ENCODE measurements at regions of chr1 and their contacts with region 1.

Region 1: DNA sequence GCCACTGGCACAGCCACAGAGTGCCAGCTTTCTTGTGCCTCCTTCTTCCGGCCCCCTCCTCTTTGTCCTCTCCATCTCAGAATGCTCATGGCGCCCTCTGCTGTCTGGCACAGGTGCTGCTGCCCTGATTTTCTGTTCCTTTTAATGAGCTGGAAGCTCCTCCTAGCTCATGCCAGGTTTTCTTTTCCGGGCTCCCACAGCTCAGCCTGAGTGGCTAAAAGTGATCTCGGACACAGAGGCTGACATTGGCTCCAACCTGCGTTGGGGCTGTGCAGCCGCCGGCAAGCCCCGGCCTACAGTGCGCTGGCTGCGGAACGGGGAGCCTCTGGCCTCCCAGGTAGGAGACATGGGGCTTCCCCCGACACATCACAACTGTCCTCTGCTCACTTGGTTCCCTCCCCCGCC is 18.7 kb downstream of the CNTN2 start:
- DNase-seq: peak; percentile 83
- ATAC-seq: peak; percentile 86
- H3K4me3 Mint-ChIP-seq: no peak overlapping the region
- H3K27ac Mint-ChIP-seq: no peak overlapping the region
- H3K4me1 Mint-ChIP-seq: no peaks in the 10 kb centered on the region
- H3K27me3 Mint-ChIP-seq: no peaks in the 10 kb centered on the region
- CTCF ChIP-seq: peak; percentile 89

Region 2: GRCh38 chr1:204797401-204797800 is 264.3 kb before region 1 on chr1:
- CTCF ChIA-PET with region 1: no interaction called
- POLR2A ChIA-PET with region 1: no interaction called
- intact Hi-C with region 1: no loop called
- DNase-seq: no peak
- ATAC-seq: no peak
- H3K4me3 Mint-ChIP-seq: no peak overlapping the region
- H3K27ac Mint-ChIP-seq: no peak overlapping the region
- H3K4me1 Mint-ChIP-seq: no peaks in the 10 kb centered on the region
- H3K27me3 Mint-ChIP-seq: no peaks in the 10 kb centered on the region
- CTCF ChIP-seq: no peak

Region 3: GRCh38 chr1:204885288-204885711 is 176.4 kb before region 1 on chr1:
- CTCF ChIA-PET with region 1: no interaction called
- POLR2A ChIA-PET with region 1: no interaction called
- intact Hi-C with region 1: no loop called
- DNase-seq: no peak
- ATAC-seq: no peak
- H3K4me3 Mint-ChIP-seq: no peak overlapping the region
- H3K27ac Mint-ChIP-seq: no peak overlapping the region
- H3K4me1 Mint-ChIP-seq: no peaks in the 10 kb centered on the region
- H3K27me3 Mint-ChIP-seq: peaks cover 10% of the 10 kb centered on the region
- CTCF ChIP-seq: no peak

Region 4: GRCh38 chr1:204967451-204967850 is 94.2 kb before region 1 on chr1:
- CTCF ChIA-PET with region 1: interaction called, 71 read pairs
- POLR2A ChIA-PET with region 1: no interaction called
- intact Hi-C with region 1: no loop called
- DNase-seq: no peak
- ATAC-seq: no peak
- H3K4me3 Mint-ChIP-seq: no peak overlapping the region
- H3K27ac Mint-ChIP-seq: no peak overlapping the region
- H3K4me1 Mint-ChIP-seq: no peaks in the 10 kb centered on the region
- H3K27me3 Mint-ChIP-seq: peaks cover 6% of the 10 kb centered on the region
- CTCF ChIP-seq: no peak

Region 5: DNA sequence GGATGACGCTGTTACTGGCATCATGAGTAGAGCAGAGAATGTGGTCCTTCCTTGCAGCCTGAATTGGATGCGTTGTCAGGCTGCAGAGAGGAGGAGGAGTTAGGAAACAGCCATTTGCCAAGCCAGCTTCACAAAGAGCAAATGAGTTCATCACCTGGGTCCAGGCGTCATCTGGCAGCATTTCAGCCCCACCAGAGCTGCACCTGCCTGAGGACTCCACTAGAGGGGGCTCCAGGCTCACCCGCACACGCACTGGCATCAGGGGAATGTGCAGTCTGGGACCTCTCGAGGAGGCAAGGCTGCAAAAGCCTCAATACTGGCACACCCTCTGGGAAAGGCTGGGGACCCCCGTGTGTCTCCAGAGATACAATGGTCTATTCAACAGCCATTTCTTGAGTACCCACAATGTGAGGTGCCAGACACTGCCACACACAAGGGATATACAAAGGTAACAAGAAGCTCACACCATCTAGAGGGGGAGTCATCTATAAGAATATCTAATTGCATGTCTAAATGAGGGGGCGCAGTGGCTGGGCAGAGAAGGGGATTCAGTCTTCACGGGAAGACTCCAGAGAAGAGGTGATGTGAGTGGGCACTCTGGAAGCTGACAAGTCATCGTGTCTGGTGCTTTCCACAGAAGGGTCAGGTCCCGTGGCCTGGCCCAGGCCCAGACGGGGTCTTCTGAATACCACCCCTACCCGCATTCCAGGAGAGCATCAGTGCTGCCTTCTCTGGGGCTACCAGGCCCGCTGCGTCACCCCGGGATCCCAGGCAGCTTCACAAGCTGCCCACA is 72.2 kb before region 1 on chr1:
- CTCF ChIA-PET with region 1: interaction called, 188 read pairs
- POLR2A ChIA-PET with region 1: no interaction called
- intact Hi-C with region 1: loop called (anchors 5 kb)
- DNase-seq: peak; percentile 74
- ATAC-seq: peak; percentile 98
- H3K4me3 Mint-ChIP-seq: no peak overlapping the region
- H3K27ac Mint-ChIP-seq: no peak overlapping the region
- H3K4me1 Mint-ChIP-seq: peaks cover 12% of the 10 kb centered on the region
- H3K27me3 Mint-ChIP-seq: no peaks in the 10 kb centered on the region
- CTCF ChIP-seq: peak; percentile 89

Region 6: GRCh38 chr1:205048382-205048781 is 13.3 kb before region 1 on chr1:
- CTCF ChIA-PET with region 1: interaction called, 22 read pairs
- POLR2A ChIA-PET with region 1: no interaction called
- intact Hi-C with region 1: no loop called
- DNase-seq: no peak
- ATAC-seq: no peak
- H3K4me3 Mint-ChIP-seq: no peak overlapping the region
- H3K27ac Mint-ChIP-seq: no peak overlapping the region
- H3K4me1 Mint-ChIP-seq: no peaks in the 10 kb centered on the region
- H3K27me3 Mint-ChIP-seq: peaks cover 20% of the 10 kb centered on the region
- CTCF ChIP-seq: no peak

Region 7: DNA sequence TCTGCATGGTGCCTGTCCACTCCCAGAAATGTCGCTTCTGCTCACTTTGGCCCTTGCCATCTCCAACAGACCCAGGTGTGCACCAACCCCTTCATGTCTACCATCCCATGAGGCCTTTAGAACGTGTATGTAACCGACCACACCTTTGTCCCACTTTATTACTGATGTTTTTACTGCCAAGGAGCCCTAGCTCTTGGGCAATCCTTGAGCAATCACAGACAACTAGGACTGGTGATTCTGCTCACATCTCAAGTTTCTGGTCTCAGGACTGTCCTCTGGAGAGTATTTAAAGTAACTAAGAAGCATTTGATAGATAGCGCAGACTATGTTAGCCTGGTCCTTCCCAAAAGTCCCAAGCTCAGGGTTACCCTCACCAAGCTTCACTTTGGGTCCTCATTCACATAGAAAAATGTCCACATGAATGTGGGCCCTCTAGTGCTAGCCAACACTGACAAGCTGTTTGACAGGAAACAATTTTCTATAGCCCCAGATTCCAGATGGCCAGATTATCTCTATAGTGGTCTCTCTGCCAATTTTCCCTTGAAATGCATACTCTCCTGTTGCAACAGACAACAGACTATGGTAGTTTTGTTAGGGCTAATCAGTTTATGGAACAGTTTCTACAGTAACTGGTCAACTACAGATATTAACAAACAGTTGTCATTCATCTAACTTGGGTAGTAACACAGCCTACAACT is 29.5 kb after region 1 on chr1:
- CTCF ChIA-PET with region 1: interaction called, 18 read pairs
- POLR2A ChIA-PET with region 1: no interaction called
- intact Hi-C with region 1: no loop called
- DNase-seq: no peak
- ATAC-seq: no peak
- H3K4me3 Mint-ChIP-seq: no peak overlapping the region
- H3K27ac Mint-ChIP-seq: peak overlapping the region; percentile 21
- H3K4me1 Mint-ChIP-seq: no peaks in the 10 kb centered on the region
- H3K27me3 Mint-ChIP-seq: no peaks in the 10 kb centered on the region
- CTCF ChIP-seq: no peak